AG04449 (cell line): ENCODE measurements at regions of chr15 and their contacts with region 1.

Region 1: DNA sequence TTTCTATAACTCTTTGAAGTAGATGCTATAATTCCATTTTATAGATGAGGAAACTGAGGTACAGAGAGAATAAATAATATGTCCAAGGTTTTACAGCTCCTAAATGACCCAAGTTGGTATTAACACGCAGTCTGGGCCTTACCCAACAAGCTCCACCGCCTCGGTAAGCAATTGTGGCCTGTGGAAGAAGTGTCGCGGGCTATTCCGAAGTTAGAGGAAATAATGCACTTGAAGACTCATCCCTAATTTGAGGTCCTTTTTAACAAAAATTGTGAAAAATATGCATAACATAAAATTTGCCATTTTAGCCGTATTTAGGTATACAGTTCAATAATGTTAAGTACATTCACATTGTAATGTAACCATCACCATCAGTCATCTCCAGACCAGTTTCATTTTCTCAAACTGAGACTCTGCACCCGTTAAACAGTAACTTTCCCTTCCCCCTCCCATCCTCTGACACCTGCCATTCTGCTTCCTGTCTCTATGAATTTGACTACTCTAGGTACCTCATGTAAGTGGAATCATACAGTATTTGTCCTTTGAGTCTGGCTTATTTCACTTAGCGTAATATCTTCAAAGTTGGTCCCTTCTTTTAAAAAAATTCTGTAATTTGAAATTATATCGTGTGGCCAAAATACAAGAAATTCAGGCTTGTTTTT is 18.2 kb downstream of the IDH3A start:
- DNase-seq: no peak
- H3K4me3 ChIP-seq: no peak overlapping the region
- CTCF ChIP-seq: no peak

Region 2: DNA sequence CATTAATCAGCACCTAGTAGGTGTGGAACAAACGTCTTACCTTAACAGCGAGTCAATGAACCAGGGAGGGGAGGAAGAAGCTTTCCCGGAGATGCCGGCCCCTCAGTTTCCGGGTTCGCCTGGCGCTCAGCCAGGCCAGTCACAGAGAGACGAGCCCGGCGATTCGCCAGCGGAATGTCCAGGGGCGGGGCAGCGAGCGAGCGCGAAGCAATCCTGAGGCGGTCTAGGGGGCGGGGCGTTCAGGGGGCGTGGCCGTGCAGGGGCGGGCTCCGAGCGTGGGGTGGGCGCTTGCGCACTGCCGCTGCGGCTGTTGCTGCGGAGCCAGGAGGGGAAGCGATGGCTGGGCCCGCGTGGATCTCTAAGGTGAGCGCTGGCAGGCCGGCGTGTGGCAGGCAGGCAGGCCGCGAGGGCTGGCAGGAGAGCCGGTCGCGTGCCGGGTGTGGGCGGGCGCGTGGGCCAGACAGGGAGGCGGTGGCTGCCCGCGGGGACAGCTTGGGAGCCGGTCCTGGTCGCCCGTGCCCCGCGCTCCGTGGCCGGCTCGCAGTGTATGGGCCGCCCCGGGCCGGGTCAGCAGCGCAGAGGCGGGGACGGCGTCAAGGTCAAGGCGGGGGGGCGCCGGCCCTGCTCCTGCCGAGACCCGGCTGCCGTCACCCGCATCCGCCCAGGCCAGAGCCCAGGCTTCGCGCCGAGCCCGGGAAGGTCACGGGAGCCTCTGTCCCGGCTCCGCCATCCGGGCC is 18.1 kb before region 1 on chr15 and contains the start of gene IDH3A:
- CTCF ChIA-PET with region 1: no interaction called
- POLR2A ChIA-PET with region 1: no interaction called
- DNase-seq: peak; percentile 41
- H3K4me3 ChIP-seq: peak within 1 kb of the TSS; percentile 74
- CTCF ChIP-seq: no peak

Region 3: GRCh38 chr15:78177447-78177873 is 10.1 kb after region 1 on chr15:
- CTCF ChIA-PET with region 1: interaction called, 11 read pairs
- POLR2A ChIA-PET with region 1: no interaction called
- DNase-seq: no peak
- H3K4me3 ChIP-seq: no peak overlapping the region
- CTCF ChIP-seq: peak; percentile 74

Region 4: DNA sequence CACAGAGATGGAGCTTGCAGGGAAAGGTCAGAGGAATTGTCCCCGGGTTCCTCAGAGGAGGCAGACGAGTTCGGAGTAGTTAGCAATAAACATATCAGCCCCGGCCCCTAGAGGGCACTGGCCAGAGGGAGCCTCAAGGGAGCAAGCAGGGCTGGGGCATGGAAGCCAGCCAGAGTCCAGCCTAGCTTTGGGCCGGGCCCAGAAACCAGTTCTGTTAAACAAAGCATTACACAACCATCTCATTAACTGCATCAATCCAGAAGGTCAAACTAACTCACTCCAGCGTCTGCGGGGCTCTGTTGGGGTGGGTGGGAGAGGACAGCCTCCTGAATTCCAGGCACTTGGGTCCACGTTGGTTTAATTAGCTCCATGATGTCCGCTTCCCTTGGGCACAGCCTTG is 229.6 kb after region 1 on chr15:
- CTCF ChIA-PET with region 1: no interaction called
- POLR2A ChIA-PET with region 1: no interaction called
- DNase-seq: no peak
- H3K4me3 ChIP-seq: no peak overlapping the region
- CTCF ChIP-seq: peak; percentile 3